ENCODE measurements at regions of chr19 and their contacts with region 1.

Region 1: GRCh38 chr19:938059-938918 is 12.5 kb downstream of the ARID3A start:
- DNase-seq: no peak
- ATAC-seq: no peak
- H3K4me3 ChIP-seq: no peak overlapping the region
- H3K27ac ChIP-seq: no peak overlapping the region
- H3K4me1 ChIP-seq: peaks cover 20% of the 10 kb centered on the region
- H3K27me3 ChIP-seq: no peaks in the 10 kb centered on the region
- CTCF ChIP-seq: no peak

Region 2: DNA sequence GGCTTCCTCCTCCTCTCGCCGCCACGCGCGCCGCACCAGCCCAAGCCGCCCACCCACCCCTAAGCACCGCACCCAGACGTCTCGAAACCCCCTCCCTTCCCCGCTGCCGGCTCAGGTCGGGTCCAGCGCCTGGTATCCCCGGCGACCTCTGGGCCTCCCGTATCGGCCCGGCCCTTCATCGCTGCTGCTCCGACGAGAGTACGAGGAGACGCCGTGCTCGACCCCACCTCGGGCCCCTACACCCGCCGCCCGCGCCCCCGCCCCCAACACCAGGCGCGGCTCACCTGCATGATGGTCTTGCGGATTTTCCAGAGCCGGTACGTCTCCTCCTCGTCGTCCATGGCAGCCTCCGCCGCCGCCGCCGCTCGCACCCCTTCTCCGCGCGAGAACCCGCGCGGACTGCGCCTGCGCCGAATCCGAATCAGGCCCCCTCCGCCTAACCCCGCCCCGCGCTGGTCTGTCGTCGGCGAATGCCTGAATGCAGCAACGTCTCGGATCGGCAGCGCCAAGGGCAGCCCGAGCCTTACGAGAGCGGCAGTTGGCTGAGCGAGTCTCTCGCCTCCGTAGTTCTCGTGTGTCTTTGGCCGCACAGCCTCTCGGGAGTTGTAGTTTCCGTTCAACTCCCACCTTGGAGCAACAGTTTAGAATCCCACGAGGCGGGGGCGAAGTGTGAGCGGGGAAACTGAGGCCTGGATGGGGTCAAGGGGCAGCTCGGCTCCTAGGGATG is 156.8 kb after region 1 on chr19 and contains the start of gene POLR2E:
- CTCF ChIA-PET with region 1: no interaction called
- POLR2A ChIA-PET with region 1: no interaction called
- in situ Hi-C with region 1: no loop called
- intact Hi-C with region 1: no loop called
- DNase-seq: peak; percentile 79
- ATAC-seq: peak; percentile 93
- H3K4me3 ChIP-seq: peak within 1 kb of the TSS; percentile 83 to 87
- H3K27ac ChIP-seq: peak within 1 kb of the TSS; percentile 87
- H3K4me1 ChIP-seq: peaks cover 24% of the 10 kb centered on the region
- H3K27me3 ChIP-seq: no peaks in the 10 kb centered on the region
- CTCF ChIP-seq: no peak
- total RNA-seq, gene POLR2E: 279 TPM

Region 3: DNA sequence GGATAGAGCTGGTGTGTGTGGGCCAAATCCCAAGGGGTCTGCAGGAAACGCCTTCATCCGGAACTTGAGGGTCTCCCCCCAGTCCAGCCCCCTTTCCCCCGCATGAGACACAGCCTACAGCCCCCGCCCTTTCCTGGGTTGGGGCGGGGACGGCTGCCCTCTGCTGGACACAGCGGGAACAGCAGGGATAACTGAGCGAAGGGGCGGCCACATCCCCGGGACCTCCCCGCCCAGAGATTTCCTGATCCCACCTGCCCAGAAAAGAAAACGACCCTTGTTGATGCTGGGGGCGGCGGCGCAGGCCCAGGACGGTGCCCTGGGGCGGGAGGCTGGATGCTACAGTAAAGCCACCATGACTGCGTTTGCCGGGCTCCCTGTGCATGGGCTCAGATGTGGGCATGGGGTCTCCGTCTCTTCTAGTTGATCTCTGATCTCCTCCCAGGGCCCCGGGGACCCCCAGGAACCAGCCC is 829.2 kb after region 1 on chr19:
- CTCF ChIA-PET with region 1: no interaction called
- POLR2A ChIA-PET with region 1: interaction called, 10 read pairs
- in situ Hi-C with region 1: no loop called
- intact Hi-C with region 1: no loop called
- DNase-seq: no peak
- ATAC-seq: peak; percentile 35
- H3K4me3 ChIP-seq: no peak overlapping the region
- H3K27ac ChIP-seq: peak overlapping the region; percentile 69
- H3K4me1 ChIP-seq: peaks cover 18% of the 10 kb centered on the region
- H3K27me3 ChIP-seq: no peaks in the 10 kb centered on the region
- CTCF ChIP-seq: peak; percentile 91

Measured in Panc1 (cell line).